ENCODE measurements at regions of chr1 and their contacts with region 1.

Region 1: GRCh38 chr1:34742667-34743270 is 12.1 kb upstream of the GJB5 start:
- DNase-seq: peak; percentile 92
- H3K4me3 ChIP-seq: no peak overlapping the region
- H3K27ac ChIP-seq: no peak overlapping the region
- H3K4me1 ChIP-seq: peaks cover 0 to 6% (median 0%) of the 10 kb centered on the region in 6 donors
- H3K27me3 ChIP-seq: peaks cover 0 to 26% (median 0%) of the 10 kb centered on the region in 7 donors
- CTCF ChIP-seq: peak; percentile 53 to 97 (median 91)
- POLR2A ChIP-seq: no peak

Region 2: GRCh38 chr1:33633019-33633801 is 1109.6 kb before region 1 on chr1:
- intact Hi-C with region 1: loop called (anchors 10 kb)
- DNase-seq: peak; percentile 92
- H3K4me3 ChIP-seq: no peak overlapping the region
- H3K27ac ChIP-seq: no peak overlapping the region
- H3K4me1 ChIP-seq: peaks cover 0 to 6% (median 5%) of the 10 kb centered on the region in 6 donors
- H3K27me3 ChIP-seq: peaks cover 0 to 55% (median 0%) of the 10 kb centered on the region in 7 donors
- CTCF ChIP-seq: peak in 10 of 11 experiments; percentile 26 to 92 (median 83)
- POLR2A ChIP-seq: no peak

Region 3: DNA sequence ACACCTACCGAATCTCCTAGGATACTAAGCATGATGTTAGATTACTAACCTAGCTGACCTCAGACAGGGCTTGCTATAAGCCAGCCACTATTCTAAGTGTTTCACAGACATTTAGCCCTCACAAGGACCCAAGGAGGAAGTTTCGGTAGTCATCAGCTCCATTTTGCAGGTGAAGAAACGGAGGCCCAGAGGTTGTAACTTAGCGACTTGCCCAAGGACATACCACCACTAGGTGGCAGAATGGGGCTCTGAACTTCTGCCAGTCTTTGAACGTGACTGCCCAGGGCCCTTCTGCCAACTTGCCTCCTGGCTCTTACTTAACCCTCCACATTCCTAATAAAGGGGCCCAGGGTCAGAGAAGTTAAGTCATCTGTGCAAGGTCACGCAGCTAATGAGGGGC is 282.6 kb before region 1 on chr1:
- intact Hi-C with region 1: loop called (anchors 10 kb)
- DNase-seq: no peak
- H3K4me3 ChIP-seq: no peak overlapping the region
- H3K27ac ChIP-seq: no peak overlapping the region
- H3K4me1 ChIP-seq: no peaks in the 10 kb centered on the region
- H3K27me3 ChIP-seq: peaks cover 0 to 12% (median 0%) of the 10 kb centered on the region in 7 donors
- CTCF ChIP-seq: peak in 10 of 11 experiments; percentile 14 to 68 (median 50)
- POLR2A ChIP-seq: no peak

Region 4: GRCh38 chr1:34796990-34797389 is 54.2 kb after region 1 on chr1:
- intact Hi-C with region 1: no loop called
- DNase-seq: no peak
- H3K4me3 ChIP-seq: peak overlapping the region in 3 of 8 donors; percentile 28 to 60 (median 34)
- H3K27ac ChIP-seq: no peak overlapping the region
- H3K4me1 ChIP-seq: peaks cover 0 to 17% (median 11%) of the 10 kb centered on the region in 6 donors
- H3K27me3 ChIP-seq: peaks cover 0 to 25% (median 13%) of the 10 kb centered on the region in 7 donors
- CTCF ChIP-seq: no peak
- POLR2A ChIP-seq: no peak

Region 5: DNA sequence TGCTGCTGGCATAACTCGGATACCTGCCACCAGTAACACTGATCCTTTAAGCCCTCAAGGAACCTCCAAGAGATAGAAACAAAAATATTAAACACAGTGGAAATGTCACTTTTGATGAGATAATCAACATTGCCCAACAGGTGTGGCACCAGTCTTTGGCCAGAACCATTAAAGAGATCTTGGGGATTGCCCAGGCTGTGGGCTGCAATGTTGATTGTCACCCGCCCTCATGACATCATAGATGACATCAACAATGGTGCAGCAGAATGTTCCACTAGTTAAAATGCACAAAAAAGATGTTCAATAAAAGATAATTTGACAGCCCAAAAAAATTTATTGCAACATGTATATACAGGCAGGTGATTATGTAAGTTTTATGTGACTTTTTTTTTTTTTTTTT is 316.2 kb after region 1 on chr1:
- intact Hi-C with region 1: no loop called
- DNase-seq: no peak
- H3K4me3 ChIP-seq: no peak overlapping the region
- H3K27ac ChIP-seq: no peak overlapping the region
- H3K4me1 ChIP-seq: no peaks in the 10 kb centered on the region
- H3K27me3 ChIP-seq: peaks cover 0 to 15% (median 0%) of the 10 kb centered on the region in 7 donors
- CTCF ChIP-seq: no peak
- POLR2A ChIP-seq: no peak